AG04449 (cell line): ENCODE measurements at regions of chr1 and their contacts with region 1.

Region 1: GRCh38 chr1:116737020-116737854 is 17.0 kb upstream of the CD2 start:
- DNase-seq: no peak
- H3K4me3 ChIP-seq: no peak overlapping the region
- CTCF ChIP-seq: peak; percentile 77

Region 2: GRCh38 chr1:116712510-116712909 is 24.7 kb before region 1 on chr1:
- CTCF ChIA-PET with region 1: no interaction called
- POLR2A ChIA-PET with region 1: no interaction called
- DNase-seq: no peak
- H3K4me3 ChIP-seq: no peak overlapping the region
- CTCF ChIP-seq: no peak

Region 3: GRCh38 chr1:116724765-116725375 is 12.4 kb before region 1 on chr1:
- CTCF ChIA-PET with region 1: interaction called, 26 read pairs
- POLR2A ChIA-PET with region 1: no interaction called
- DNase-seq: no peak
- H3K4me3 ChIP-seq: no peak overlapping the region
- CTCF ChIP-seq: peak; percentile 62

Region 4: DNA sequence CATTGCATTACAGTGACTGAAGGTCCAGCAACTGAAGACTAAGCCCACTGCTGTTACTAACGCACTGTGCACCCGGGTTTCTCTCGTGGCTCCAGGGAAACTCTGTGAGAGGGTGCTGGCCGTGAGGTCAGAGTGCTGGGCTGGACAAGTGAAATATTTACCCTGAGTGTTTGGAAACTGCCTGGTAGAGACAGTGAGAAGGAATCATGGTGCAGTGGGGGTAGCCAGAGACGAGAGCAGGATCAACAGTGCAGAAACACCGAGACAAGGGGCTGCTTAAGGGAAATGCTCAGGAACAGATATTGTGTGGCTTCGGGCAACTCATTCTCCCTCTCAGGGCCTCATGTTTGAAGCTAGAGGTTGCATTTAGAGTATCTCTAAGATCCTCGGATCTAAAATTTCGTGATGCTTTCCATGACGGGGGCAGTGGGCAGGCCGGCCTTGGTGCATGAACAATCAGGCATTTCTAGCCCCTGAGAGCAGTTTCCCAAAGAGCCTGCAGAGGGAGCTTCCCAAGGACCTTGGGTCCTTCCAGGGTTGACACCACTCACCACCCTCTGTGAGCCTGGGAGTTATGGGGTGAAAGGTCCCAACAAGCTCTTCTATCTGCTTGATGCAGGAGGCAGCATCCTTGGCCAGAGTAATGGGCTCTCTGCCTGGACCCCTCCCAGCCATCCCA is 26.7 kb after region 1 on chr1:
- CTCF ChIA-PET with region 1: interaction called, 12 read pairs
- POLR2A ChIA-PET with region 1: no interaction called
- DNase-seq: no peak
- H3K4me3 ChIP-seq: no peak overlapping the region
- CTCF ChIP-seq: peak; percentile 50

Region 5: GRCh38 chr1:117077267-117077666 is 340.0 kb after region 1 on chr1:
- CTCF ChIA-PET with region 1: no interaction called
- POLR2A ChIA-PET with region 1: no interaction called
- DNase-seq: peak; percentile 82
- H3K4me3 ChIP-seq: no peak overlapping the region
- CTCF ChIP-seq: no peak